AG04449 (cell line): ENCODE measurements at regions of chr1 and their contacts with region 1.

Region 1: GRCh38 chr1:8482979-8483391 is 165.1 kb downstream of the SLC45A1 start:
- DNase-seq: no peak
- H3K4me3 ChIP-seq: no peak overlapping the region
- CTCF ChIP-seq: no peak

Region 2: GRCh38 chr1:8427493-8427892 is 55.5 kb before region 1 on chr1:
- CTCF ChIA-PET with region 1: no interaction called
- POLR2A ChIA-PET with region 1: no interaction called
- DNase-seq: no peak
- H3K4me3 ChIP-seq: no peak overlapping the region
- CTCF ChIP-seq: no peak

Region 3: GRCh38 chr1:8497210-8497801 is 14.3 kb after region 1 on chr1:
- CTCF ChIA-PET with region 1: interaction called, 16 read pairs
- POLR2A ChIA-PET with region 1: no interaction called
- DNase-seq: no peak
- H3K4me3 ChIP-seq: no peak overlapping the region
- CTCF ChIP-seq: no peak

Region 4: GRCh38 chr1:8525558-8526275 is 42.7 kb after region 1 on chr1:
- CTCF ChIA-PET with region 1: no interaction called
- POLR2A ChIA-PET with region 1: no interaction called
- DNase-seq: peak; percentile 70
- H3K4me3 ChIP-seq: peak overlapping the region; percentile 69
- CTCF ChIP-seq: no peak

Region 5: DNA sequence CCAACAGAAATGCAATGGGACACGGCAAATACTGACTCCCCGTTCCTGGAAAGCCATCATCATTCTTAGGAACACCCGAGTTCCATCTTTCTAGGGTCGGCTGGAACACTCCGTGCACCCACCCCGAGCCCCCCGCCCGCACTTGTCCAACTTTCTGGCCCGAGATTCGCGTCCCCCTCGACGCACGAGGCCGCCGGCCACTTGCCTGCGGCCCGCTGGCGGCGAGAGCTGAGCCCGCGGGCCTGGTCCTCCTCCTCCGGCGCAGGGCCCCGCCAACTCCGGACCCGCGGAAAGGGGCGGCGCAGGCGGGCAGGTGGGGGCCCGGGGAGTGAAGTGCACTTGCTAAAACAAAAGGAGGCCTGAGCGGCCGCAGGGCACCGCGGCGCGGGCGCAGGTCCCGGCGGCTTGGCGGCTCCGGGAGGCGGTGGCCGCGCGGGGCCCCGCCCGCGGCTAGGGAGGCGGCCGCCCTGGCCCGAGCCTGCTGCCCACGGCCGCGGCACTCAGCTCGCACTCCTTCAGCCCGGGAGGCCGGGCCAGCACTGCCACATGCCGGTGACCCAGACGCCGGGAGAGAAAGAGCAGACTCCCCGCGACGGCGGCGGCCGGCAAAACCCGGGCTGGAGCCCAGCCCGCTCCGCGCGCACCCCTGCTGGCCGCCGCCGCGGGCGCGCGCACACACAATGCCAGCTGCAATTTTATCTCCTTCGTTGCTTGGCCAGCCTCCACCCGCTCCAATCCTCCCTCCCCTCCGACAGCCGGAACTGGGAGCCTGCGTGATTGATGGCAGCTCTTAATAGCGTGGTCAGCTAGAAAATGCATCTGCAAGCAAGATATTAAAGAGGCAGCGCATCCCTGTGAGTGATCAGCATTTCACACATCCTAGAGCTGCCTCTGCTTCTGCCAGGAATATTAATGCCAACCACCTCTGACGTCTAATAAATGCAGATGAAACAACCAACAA is 220.1 kb after region 1 on chr1:
- CTCF ChIA-PET with region 1: no interaction called
- POLR2A ChIA-PET with region 1: no interaction called
- DNase-seq: no peak
- H3K4me3 ChIP-seq: peak overlapping the region; percentile 59
- CTCF ChIP-seq: peak; percentile 24

Region 6: DNA sequence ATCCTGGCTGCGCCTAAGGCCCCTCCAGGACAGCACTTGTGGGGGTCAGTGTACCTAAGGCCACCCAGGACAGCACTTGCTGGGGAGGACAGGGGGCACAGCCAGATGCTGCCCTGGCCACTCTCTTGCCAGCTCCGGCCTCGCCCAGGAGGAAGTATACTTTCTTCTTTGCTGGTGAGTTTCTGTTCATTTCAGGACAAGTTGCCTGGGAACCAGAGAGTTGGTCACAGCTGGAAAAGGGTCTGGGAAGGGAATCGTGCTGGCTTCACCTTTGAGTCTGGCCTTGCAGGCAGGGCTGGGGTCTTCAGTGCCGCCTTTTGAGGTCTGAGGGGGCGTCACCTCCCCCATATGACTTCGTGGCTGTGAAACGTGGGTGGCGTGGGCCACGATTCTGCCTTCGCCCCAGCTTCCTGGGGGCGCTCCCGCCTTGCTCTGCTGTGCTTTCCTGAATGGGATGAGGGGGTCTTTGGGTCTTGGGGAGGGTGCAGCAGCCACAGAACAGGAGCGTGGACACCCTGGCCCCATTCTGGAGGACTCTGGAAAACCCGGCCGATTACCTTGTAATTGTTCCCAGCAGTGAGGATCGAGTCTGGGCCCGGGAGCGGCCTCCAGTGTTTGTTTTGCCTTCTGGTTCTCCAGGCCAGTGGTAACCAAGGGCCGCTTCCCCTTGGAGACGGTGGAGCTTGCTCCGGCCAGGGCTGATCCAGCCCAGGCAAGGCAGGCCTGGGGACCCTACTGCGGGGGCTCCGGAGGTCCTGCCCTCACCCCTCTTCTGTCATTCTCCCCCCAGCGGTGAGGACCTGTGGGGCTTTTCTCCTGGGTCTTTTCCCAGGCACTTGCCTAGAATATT is 855.6 kb after region 1 on chr1:
- CTCF ChIA-PET with region 1: no interaction called
- POLR2A ChIA-PET with region 1: no interaction called
- DNase-seq: no peak
- H3K4me3 ChIP-seq: no peak overlapping the region
- CTCF ChIP-seq: no peak